KBM-7 (cell line): ENCODE measurements at regions of chr11 and their contacts with region 1.

Region 1: DNA sequence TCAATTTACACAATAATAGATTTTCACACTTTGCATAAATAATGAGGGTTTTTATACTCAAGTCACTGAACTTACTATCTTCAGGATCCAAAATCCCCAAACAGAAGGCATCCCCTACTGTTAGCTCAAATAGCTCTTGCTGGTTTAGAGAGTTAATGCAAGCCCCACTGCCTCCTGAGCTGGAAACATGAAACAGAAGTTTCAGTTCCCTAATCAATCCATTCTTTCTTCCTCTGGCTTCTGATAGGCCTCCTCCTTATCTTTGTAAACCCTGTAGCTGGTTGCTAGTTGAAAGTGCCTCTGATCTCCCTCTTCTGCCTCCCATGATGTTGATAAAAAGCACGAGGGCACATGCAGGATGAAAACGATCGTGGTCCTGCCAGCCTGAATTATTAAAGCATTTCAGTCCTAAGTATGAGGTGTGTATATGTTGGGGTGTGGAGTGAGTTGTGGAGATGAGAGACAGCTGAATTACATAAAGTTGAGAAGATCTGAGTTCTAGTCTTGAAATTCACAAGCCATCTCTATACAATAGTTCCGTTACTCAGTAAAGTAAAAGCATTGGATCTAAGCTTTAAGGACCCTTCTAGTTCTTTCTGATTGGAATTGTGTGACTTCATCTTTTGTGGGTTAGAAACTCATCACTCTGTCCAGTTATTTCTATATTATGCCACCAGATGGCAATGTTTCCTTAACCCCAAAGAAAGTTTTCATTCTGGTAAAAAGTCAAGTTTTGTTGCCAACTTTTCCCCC is 35.0 kb upstream of the EHF start:
- DNase-seq: peak; percentile 80

Region 2: DNA sequence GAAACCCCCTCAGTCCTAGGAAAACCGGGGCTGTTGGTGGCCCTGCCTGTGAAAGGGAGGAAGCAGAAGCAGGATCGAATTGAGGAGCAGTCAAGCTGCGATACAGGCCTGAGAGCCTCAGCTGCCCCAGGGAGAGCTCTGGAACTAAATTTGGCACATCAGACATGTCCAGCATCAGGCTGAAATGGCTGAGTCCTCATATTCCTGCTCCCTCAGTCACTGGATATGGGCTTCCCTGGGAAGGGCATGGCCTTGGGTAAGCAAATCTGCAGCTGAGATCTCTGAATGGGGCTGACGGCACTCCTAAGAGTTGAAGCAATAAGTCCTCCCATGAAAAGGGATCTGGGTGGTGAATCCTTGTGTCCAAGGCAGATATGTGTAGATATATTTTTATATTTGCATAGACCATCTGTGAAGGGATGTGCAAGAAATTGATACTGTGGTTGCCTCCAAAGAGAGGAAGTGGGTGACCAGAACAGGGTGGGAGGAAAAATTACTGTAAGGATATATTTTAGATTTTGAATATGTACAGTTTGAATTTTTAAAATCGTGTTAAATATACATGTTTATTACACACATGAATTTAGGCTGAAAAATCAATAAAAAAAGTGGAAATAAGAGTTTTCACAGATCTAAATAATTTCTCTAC is 284.8 kb after region 1 on chr11:
- in situ Hi-C with region 1: loop called (anchors 10 kb)
- DNase-seq: peak; percentile 6